ENCODE measurements at regions of chr12 and their contacts with region 1.

Region 1: GRCh38 chr12:48795480-48796455 is 6.9 kb upstream of the ADCY6 start:
- DNase-seq: peak; percentile 27 to 60 (median 59)
- H3K4me3 ChIP-seq: no peak overlapping the region
- H3K4me3 Mint-ChIP-seq: no peak overlapping the region
- H3K27ac ChIP-seq: no peak overlapping the region
- H3K27ac Mint-ChIP-seq: no peak overlapping the region
- H3K4me1 ChIP-seq: peaks cover 7 to 8% of the 10 kb centered on the region in 2 donors
- H3K4me1 Mint-ChIP-seq: peaks cover 7% of the 10 kb centered on the region
- H3K27me3 ChIP-seq: no peaks in the 10 kb centered on the region
- H3K27me3 Mint-ChIP-seq: peaks cover 7 to 9% (median 9%) of the 10 kb centered on the region in 3 donors
- CTCF ChIP-seq: peak; percentile 96

Region 2: DNA sequence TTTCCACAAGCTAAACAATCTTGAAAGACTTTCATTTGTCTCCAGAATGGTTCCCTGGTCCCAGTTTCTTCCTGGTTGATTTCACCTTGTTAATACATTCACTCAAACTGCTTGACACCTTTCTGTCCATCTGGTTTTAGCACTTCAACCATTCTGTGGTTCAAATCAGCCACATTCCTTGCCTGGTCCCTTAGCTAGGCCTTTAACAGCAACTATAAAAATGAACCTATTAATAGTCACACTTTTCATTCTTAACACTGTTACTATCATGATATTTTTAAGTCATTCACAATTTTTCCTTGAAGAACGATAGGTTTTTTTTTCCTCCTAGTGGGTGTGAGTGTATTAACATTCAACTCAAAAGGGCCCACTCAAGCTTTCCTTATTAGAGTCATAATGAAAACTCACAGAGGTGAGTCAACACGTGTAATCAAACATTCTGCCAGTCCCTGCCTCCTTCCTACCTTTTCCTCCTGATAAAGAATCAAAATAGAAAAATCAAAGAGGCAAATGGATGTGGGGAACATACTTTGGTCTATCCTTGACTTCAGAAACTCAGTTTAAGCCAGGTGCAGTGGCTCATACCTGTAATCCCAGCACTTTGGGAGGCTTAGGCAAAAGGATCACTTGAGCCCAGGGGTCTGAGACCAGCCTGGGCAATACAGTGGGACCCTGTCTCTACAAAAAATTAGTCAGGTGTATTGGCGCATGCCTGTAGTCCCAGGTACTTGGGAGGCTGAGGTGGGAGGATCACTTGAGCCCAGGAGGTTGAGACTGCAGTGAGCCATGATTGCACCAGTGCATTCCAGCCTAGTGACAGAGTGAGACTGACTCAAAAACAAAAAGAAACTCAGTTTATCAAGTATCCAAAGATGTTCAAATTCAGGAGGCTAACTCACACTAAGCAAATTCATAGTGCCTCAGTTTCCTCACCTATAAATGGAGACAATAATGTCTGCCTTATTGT is 44.7 kb before region 1 on chr12:
- intact Hi-C with region 1: loop called (anchors 1 to 5 kb)
- DNase-seq: no peak
- H3K4me3 ChIP-seq: no peak overlapping the region
- H3K4me3 Mint-ChIP-seq: no peak overlapping the region
- H3K27ac ChIP-seq: no peak overlapping the region
- H3K27ac Mint-ChIP-seq: peak overlapping the region in 1 of 7 donors; percentile 50
- H3K4me1 ChIP-seq: no peaks in the 10 kb centered on the region
- H3K4me1 Mint-ChIP-seq: peaks cover 3% of the 10 kb centered on the region
- H3K27me3 ChIP-seq: no peaks in the 10 kb centered on the region
- H3K27me3 Mint-ChIP-seq: peaks cover 0 to 2% (median 2%) of the 10 kb centered on the region in 3 donors
- CTCF ChIP-seq: no peak

Region 3: GRCh38 chr12:48758221-48758620 is 37.5 kb before region 1 on chr12:
- intact Hi-C with region 1: loop called (anchors 1 to 5 kb)
- DNase-seq: no peak
- H3K4me3 ChIP-seq: no peak overlapping the region
- H3K4me3 Mint-ChIP-seq: no peak overlapping the region
- H3K27ac ChIP-seq: no peak overlapping the region
- H3K27ac Mint-ChIP-seq: no peak overlapping the region
- H3K4me1 ChIP-seq: no peaks in the 10 kb centered on the region
- H3K4me1 Mint-ChIP-seq: no peaks in the 10 kb centered on the region
- H3K27me3 ChIP-seq: no peaks in the 10 kb centered on the region
- H3K27me3 Mint-ChIP-seq: peaks cover 0 to 3% (median 2%) of the 10 kb centered on the region in 3 donors
- CTCF ChIP-seq: no peak

Region 4: DNA sequence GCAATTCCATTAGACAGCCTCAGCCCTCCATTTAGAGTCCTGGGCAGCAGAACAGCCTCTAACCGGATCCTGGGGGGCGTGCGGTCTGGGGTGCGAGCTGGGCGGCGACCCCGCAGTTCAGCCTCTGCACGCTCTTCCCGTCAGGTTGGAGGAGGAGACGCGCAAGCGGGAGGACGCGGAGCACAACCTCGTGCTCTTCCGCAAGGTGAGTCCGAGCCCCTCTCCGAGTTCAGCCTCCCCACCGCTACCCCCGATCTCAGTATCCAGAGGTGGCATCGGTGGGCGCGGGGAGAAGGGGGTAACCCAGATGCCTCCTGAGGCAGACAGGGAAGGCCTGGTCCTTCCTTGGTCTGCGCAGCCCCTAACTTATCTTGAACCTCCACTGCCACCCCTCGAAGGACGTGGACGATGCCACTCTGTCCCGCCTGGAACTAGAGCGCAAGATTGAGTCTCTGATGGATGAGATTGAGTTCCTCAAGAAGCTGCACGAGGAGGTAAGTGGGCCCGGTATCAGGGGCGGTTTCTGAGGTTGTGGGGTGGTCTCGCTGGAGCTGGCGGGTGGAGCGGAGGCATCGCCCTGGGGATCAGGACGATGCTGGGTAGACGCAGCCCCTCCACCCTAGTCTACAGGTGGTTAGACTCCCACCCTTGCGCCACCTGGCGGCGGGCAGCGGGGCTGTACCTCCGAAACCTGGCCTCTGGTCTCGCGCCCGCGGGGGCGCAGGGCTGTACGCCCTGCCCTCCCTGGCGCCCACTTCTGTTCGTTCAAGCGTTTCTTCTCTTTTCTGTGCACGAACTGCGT is 500.5 kb after region 1 on chr12:
- intact Hi-C with region 1: no loop called
- DNase-seq: peak; percentile 27 to 47 (median 38)
- H3K4me3 ChIP-seq: peak overlapping the region in 2 of 3 experiments; percentile 3 to 60
- H3K4me3 Mint-ChIP-seq: peak overlapping the region; percentile 60 to 83
- H3K27ac ChIP-seq: no peak overlapping the region
- H3K27ac Mint-ChIP-seq: no peak overlapping the region
- H3K4me1 ChIP-seq: peaks cover 13 to 30% of the 10 kb centered on the region in 2 donors
- H3K4me1 Mint-ChIP-seq: peaks cover 25% of the 10 kb centered on the region
- H3K27me3 ChIP-seq: peaks cover 37 to 73% of the 10 kb centered on the region in 2 donors
- H3K27me3 Mint-ChIP-seq: peaks cover 70 to 92% (median 74%) of the 10 kb centered on the region in 3 donors
- CTCF ChIP-seq: peak; percentile 90

Measured in CD14-positive monocyte (primary cell).